Pancreas (tissue), 10 donors: ENCODE measurements at regions of chr15 and their contacts with region 1.

Region 1: DNA sequence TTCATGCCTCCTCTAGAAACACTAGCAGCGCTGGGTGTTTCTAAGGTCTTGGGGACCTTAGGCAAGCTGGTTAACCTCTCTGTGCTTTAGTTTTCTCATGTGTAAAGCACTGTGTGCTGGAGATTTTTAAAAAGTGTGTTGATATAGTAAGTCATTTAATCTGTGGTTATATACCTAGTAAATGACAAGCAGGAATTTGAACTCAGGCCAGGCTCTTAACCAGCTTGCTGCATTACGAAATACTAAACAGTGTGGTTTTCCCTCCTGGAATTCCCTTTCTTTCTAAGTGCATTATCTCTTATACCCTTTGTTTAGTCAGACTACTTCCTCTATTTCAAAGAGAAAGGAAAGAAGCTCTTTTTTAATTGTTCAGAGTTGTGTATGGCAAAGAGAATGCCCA is 26.5 kb downstream of the NEO1 start:
- DNase-seq: peak in 3 of 6 donors; percentile 3 to 27 (median 13)
- ATAC-seq: peak in 3 of 4 donors; percentile 24 to 66 (median 50)
- H3K4me3 ChIP-seq: no peak overlapping the region
- H3K27ac ChIP-seq: peak overlapping the region in 2 of 4 donors; percentile 26 to 34
- H3K4me1 ChIP-seq: peaks cover 4 to 23% (median 17%) of the 10 kb centered on the region in 3 donors
- H3K27me3 ChIP-seq: no peaks in the 10 kb centered on the region
- CTCF ChIP-seq: no peak

Region 2: DNA sequence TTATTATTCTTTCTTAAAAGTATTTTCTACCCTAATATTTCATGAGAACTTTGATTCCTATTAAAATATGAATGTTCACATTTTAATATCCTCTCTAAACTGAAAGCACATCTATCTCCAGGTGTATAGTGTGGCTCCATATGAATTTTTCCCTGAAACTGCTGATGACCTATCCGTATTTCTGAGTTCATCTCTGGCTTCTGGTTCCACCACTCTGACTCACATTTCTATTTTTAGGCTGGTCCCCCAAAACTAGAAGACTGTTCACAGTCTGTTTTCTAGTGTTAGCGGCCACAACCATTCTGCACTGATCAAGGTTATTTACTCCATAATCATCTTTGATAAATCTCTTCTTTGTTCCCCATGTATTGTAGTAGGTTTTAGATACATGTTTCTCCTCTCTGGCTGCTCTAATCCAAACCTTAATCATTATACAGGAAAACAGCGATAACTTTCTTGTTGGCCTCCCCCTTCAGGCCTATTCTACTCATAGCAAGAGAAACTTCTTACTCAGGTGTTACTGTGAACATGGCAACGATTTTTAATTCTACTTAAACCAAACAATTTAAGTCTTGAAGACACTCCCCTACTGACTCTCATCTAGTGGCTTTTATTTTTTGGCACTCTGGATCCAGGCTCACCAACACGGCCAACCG is 307.9 kb before region 1 on chr15:
- intact Hi-C with region 1: no loop called
- DNase-seq: no peak
- ATAC-seq: peak in 3 of 4 donors; percentile 39 to 44 (median 40)
- H3K4me3 ChIP-seq: no peak overlapping the region
- H3K27ac ChIP-seq: no peak overlapping the region
- H3K4me1 ChIP-seq: no peaks in the 10 kb centered on the region
- H3K27me3 ChIP-seq: no peaks in the 10 kb centered on the region
- CTCF ChIP-seq: no peak

Region 3: DNA sequence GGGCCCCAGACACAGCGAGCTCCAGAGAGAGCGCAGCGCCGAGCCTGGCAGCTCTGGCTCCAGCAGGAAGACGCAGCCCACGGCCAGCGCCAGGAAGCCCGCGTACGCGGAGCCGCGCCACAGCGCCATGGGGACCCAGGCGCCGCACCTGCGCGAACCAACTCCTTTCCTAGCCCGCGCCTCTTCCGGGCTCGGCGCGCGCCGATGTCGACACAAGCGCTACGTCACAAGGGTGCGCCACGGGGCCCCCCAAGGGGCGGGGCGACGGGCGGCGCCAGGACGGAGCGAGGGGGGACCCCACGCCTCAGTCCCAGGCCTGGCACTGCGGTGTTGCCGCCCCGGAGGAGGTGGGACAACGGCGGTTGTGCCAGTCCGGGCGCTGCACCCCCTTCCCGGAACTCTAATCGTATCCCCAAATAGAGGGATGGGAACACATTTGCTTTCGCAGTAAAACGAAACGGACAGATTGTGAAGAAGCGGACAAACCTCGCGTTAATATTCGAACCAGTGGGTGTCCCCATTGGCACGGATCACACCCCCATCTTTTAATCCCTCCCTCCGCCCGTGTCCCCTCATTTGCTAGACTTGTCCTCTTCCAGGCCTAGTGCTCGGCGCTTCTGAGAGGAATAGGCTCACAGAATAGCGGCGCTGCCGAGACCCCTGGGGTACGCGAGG is 295.0 kb before region 1 on chr15 and contains the start of gene ADPGK:
- intact Hi-C with region 1: loop called in 1 of 3 experiments (anchors 10 kb)
- DNase-seq: peak; percentile 87 to 99 (median 95)
- ATAC-seq: peak; percentile 93 to 96 (median 94)
- H3K4me3 ChIP-seq: peak within 1 kb of the TSS; percentile 75 to 100 (median 95)
- H3K27ac ChIP-seq: peak within 1 kb of the TSS; percentile 76 to 94 (median 88)
- H3K4me1 ChIP-seq: peaks cover 10 to 24% (median 13%) of the 10 kb centered on the region in 3 donors
- H3K27me3 ChIP-seq: no peaks in the 10 kb centered on the region
- CTCF ChIP-seq: no peak
- total RNA-seq, gene ADPGK: 22.9 to 32.9 (median 25.6) TPM

Region 4: GRCh38 chr15:72813345-72814004 is 265.2 kb before region 1 on chr15:
- intact Hi-C with region 1: loop called in 1 of 3 experiments (anchors 10 kb)
- DNase-seq: no peak
- ATAC-seq: no peak
- H3K4me3 ChIP-seq: no peak overlapping the region
- H3K27ac ChIP-seq: no peak overlapping the region
- H3K4me1 ChIP-seq: no peaks in the 10 kb centered on the region
- H3K27me3 ChIP-seq: no peaks in the 10 kb centered on the region
- CTCF ChIP-seq: no peak